ENCODE measurements at regions of chr3 and their contacts with region 1.

Region 1: DNA sequence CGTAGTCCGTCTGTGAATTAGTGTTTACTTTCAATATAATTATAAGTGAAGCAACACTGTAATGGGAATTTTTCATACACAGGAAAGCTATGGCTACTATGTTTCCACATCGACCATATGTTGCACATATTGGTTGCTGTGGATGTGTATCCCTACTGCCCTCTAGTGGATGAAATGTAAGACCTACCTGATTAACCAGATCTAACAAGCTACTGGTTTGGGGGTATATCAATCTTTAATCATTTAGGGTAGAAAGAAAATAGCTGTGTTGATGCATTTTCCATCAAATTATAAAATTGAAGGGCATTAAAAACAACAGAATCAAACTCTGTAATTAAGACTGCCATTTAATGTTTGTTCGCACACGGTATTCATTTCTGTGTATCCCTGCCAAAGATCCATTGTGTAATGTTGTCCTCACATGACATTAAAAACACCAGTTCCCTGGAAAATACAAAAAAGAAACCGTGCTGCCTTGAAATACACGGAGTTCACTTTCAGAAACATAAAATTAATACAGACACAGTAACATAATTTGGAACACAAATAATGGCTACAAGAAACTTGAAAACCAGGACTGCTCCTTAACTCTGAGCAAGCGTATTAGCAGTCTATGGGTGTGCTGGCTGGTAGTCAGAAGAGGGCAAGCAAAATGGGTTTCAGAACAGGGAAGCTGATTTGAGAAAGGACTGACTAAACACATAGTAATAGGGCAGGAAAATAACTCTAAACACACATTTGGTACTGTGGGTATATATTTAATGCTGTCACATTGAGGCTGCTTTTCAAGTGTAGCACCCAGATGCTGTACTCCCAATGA is 125.1 kb downstream of the TIGIT start:
- DNase-seq: peak; percentile 83
- H3K4me3 Mint-ChIP-seq: peak overlapping the region; percentile 50
- H3K27ac Mint-ChIP-seq: peak overlapping the region; percentile 19
- H3K4me1 Mint-ChIP-seq: peaks cover 10% of the 10 kb centered on the region
- H3K27me3 Mint-ChIP-seq: no peaks in the 10 kb centered on the region
- CTCF ChIP-seq: peak; percentile 75

Region 2: DNA sequence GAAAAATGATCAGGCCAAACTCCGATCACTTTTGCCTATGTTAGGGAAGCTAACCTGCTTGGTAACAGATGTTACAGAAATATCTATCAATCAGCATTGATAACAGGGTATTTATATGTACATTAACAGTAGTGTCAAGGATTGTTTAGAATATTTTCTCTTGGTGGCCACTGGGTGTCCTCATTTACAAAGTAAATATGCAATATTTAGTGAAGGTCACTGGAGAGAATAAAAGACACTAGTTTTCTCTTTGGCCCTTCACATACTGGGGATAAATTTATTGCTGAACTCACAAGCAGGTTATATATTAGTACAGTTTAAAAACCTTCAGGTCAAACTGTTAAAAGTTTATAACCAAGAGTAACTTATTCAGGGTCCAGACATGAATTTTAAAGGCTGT is 56.1 kb before region 1 on chr3:
- CTCF ChIA-PET with region 1: interaction called, 11 read pairs
- POLR2A ChIA-PET with region 1: no interaction called
- intact Hi-C with region 1: no loop called
- DNase-seq: peak; percentile 33
- H3K4me3 Mint-ChIP-seq: no peak overlapping the region
- H3K27ac Mint-ChIP-seq: no peak overlapping the region
- H3K4me1 Mint-ChIP-seq: peaks cover 7% of the 10 kb centered on the region
- H3K27me3 Mint-ChIP-seq: no peaks in the 10 kb centered on the region
- CTCF ChIP-seq: peak; percentile 48

Region 3: GRCh38 chr3:114400371-114400770 is 18.6 kb before region 1 on chr3:
- CTCF ChIA-PET with region 1: interaction called, 12 read pairs
- POLR2A ChIA-PET with region 1: interaction called, 3 read pairs
- intact Hi-C with region 1: no loop called
- DNase-seq: no peak
- H3K4me3 Mint-ChIP-seq: no peak overlapping the region
- H3K27ac Mint-ChIP-seq: no peak overlapping the region
- H3K4me1 Mint-ChIP-seq: peaks cover 5% of the 10 kb centered on the region
- H3K27me3 Mint-ChIP-seq: no peaks in the 10 kb centered on the region
- CTCF ChIP-seq: no peak

Region 4: GRCh38 chr3:114432310-114432709 is 13.4 kb after region 1 on chr3:
- CTCF ChIA-PET with region 1: interaction called, 26 read pairs
- POLR2A ChIA-PET with region 1: interaction called, 3 read pairs
- intact Hi-C with region 1: no loop called
- DNase-seq: no peak
- H3K4me3 Mint-ChIP-seq: no peak overlapping the region
- H3K27ac Mint-ChIP-seq: no peak overlapping the region
- H3K4me1 Mint-ChIP-seq: peaks cover 12% of the 10 kb centered on the region
- H3K27me3 Mint-ChIP-seq: no peaks in the 10 kb centered on the region
- CTCF ChIP-seq: no peak

Region 5: GRCh38 chr3:114447545-114447944 is 28.6 kb after region 1 on chr3:
- CTCF ChIA-PET with region 1: interaction called, 33 read pairs
- POLR2A ChIA-PET with region 1: interaction called, 5 read pairs
- intact Hi-C with region 1: no loop called
- DNase-seq: peak; percentile 5
- H3K4me3 Mint-ChIP-seq: peak overlapping the region; percentile 56
- H3K27ac Mint-ChIP-seq: peak overlapping the region; percentile 47
- H3K4me1 Mint-ChIP-seq: peaks cover 37% of the 10 kb centered on the region
- H3K27me3 Mint-ChIP-seq: no peaks in the 10 kb centered on the region
- CTCF ChIP-seq: no peak

Region 6: DNA sequence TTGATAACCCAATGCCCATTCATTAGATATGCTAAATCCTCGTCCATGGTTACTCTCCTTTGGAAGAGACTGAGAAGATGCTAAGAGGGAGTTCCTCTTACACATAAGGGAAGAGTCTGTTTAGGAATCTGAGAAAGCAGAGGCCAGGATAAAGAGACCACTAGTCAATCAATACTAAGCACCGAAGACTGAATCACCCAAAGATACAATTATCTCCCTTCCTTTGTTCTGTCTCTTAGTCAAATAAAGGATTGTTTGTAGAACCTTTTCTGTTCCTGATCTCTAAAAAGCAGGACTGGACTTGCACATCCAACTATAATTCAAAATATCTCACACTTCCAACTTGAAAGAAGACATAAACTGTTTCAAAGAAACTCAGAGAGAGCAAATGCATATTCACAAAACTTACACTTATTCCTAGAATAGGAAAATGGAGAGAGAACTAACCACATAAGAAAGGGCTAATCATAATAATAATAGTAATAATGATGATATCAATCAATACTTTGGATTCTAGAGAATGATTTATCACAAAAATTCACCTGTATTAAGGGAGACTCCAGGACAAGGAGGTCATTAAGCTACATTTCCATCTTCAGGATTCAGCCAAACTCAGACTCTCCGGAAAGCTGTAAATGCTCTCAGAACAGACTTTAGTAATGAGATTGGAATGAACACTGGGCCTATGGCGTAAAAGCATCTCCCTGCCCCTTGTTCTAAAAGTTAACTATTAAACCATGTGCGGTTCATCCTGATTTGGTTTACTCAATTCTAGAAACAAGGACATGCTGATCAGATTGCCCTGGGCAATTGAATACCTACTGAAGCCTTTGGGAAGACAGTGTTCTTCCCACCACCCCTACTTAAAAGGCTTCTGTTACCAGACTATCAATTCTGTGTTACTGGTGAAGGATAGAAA is 326.6 kb after region 1 on chr3:
- CTCF ChIA-PET with region 1: no interaction called
- POLR2A ChIA-PET with region 1: no interaction called
- intact Hi-C with region 1: no loop called
- DNase-seq: peak; percentile 25
- H3K4me3 Mint-ChIP-seq: peak overlapping the region; percentile 3
- H3K27ac Mint-ChIP-seq: peak overlapping the region; percentile 32
- H3K4me1 Mint-ChIP-seq: peaks cover 25% of the 10 kb centered on the region
- H3K27me3 Mint-ChIP-seq: no peaks in the 10 kb centered on the region
- CTCF ChIP-seq: no peak

Region 7: DNA sequence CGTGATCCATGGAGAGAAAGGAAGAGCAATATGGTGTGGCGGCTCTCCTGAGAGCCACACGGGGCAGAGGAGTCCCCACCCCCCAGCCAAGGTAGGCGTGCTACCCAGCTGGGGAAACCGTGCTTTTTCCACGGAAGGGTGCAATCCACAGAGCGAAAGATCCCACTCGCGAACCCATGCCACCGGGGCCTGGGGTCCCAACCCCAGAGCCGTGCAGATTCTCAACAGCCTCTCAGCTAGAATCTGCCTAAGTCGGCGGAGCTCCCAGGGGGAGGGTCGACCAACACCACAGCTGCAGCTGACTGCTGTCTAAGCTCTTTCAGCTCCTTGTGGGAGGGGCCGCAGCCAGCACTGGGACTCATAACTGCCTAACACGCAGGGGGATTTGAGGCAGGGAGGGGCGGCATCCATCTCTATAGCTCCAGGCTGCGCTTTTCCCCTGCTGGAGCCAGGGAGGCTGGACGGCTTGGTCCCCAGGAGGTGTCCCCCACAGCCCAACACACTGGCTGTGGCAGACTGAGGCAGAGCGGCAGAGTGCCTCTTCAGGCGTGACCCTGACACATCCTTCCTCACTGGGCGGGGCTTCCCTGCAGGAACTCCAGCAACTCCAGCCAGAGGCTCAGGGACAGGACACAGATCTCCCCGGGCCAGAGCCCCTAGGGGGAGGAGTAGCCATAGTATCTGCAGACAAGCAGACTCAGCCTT is 835.7 kb after region 1 on chr3:
- CTCF ChIA-PET with region 1: no interaction called
- POLR2A ChIA-PET with region 1: no interaction called
- intact Hi-C with region 1: no loop called
- DNase-seq: no peak
- H3K4me3 Mint-ChIP-seq: no peak overlapping the region
- H3K27ac Mint-ChIP-seq: no peak overlapping the region
- H3K4me1 Mint-ChIP-seq: no peaks in the 10 kb centered on the region
- H3K27me3 Mint-ChIP-seq: no peaks in the 10 kb centered on the region
- CTCF ChIP-seq: no peak